Activated B cell treated with CpG ODN at 0.5 μM for 24 hours (primary cell): ENCODE measurements at regions of chr7 and their contacts with region 1.

Region 1: GRCh38 chr7:116236020-116236630 is 25.8 kb downstream of the TES start:
- DNase-seq: no peak
- ATAC-seq: peak; percentile 77
- H3K4me3 Mint-ChIP-seq: no peak overlapping the region
- H3K27ac Mint-ChIP-seq: no peak overlapping the region
- H3K4me1 Mint-ChIP-seq: peaks cover 27% of the 10 kb centered on the region
- H3K27me3 Mint-ChIP-seq: no peaks in the 10 kb centered on the region
- CTCF ChIP-seq: no peak

Region 2: GRCh38 chr7:116138202-116138801 is 97.8 kb before region 1 on chr7:
- CTCF ChIA-PET with region 1: interaction called, 56 read pairs
- POLR2A ChIA-PET with region 1: no interaction called
- intact Hi-C with region 1: loop called (anchors 1 kb)
- DNase-seq: no peak
- ATAC-seq: peak; percentile 91
- H3K4me3 Mint-ChIP-seq: no peak overlapping the region
- H3K27ac Mint-ChIP-seq: no peak overlapping the region
- H3K4me1 Mint-ChIP-seq: peaks cover 33% of the 10 kb centered on the region
- H3K27me3 Mint-ChIP-seq: no peaks in the 10 kb centered on the region
- CTCF ChIP-seq: peak; percentile 48

Region 3: GRCh38 chr7:116173051-116174028 is 62.8 kb before region 1 on chr7:
- CTCF ChIA-PET with region 1: interaction called, 318 read pairs
- POLR2A ChIA-PET with region 1: no interaction called
- intact Hi-C with region 1: loop called (anchors 1 kb)
- DNase-seq: no peak
- ATAC-seq: peak; percentile 49
- H3K4me3 Mint-ChIP-seq: no peak overlapping the region
- H3K27ac Mint-ChIP-seq: no peak overlapping the region
- H3K4me1 Mint-ChIP-seq: peaks cover 12% of the 10 kb centered on the region
- H3K27me3 Mint-ChIP-seq: no peaks in the 10 kb centered on the region
- CTCF ChIP-seq: no peak

Region 4: GRCh38 chr7:116180302-116180701 is 55.8 kb before region 1 on chr7:
- CTCF ChIA-PET with region 1: interaction called, 318 read pairs
- POLR2A ChIA-PET with region 1: no interaction called
- intact Hi-C with region 1: loop called (anchors 1 kb)
- DNase-seq: no peak
- ATAC-seq: peak; percentile 81
- H3K4me3 Mint-ChIP-seq: no peak overlapping the region
- H3K27ac Mint-ChIP-seq: no peak overlapping the region
- H3K4me1 Mint-ChIP-seq: no peaks in the 10 kb centered on the region
- H3K27me3 Mint-ChIP-seq: peaks cover 2% of the 10 kb centered on the region
- CTCF ChIP-seq: no peak

Region 5: GRCh38 chr7:116200963-116201362 is 35.2 kb before region 1 on chr7:
- CTCF ChIA-PET with region 1: interaction called, 21 read pairs
- POLR2A ChIA-PET with region 1: no interaction called
- intact Hi-C with region 1: no loop called
- DNase-seq: no peak
- ATAC-seq: no peak
- H3K4me3 Mint-ChIP-seq: no peak overlapping the region
- H3K27ac Mint-ChIP-seq: no peak overlapping the region
- H3K4me1 Mint-ChIP-seq: no peaks in the 10 kb centered on the region
- H3K27me3 Mint-ChIP-seq: no peaks in the 10 kb centered on the region
- CTCF ChIP-seq: no peak

Region 6: DNA sequence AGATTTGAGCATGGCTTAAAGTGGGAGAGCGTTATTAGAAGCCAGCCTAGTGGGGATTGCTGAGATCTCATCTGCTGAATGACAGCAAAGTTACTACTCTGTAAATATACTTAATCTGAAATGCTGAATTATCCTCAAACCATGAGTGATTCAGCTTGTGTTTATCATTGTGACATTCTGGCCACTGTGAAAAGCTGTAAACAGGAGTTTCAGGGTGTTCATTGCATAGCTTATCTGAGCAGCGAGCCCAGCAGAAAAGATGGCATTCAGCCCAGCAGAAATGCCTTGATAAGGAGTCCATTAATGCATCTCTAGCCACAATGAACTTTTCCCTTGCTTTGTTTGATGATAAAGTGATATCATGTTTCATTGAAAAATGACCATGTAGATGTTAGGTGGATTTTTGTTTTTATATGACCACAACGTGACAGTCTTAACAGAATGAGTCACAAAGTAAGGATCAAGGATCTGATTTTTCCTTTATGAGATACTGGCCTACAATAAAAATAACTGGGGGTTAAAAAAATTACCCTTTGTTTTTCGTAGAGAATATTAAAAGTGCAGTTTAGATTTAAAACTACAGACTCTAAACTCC is 18.0 kb before region 1 on chr7:
- CTCF ChIA-PET with region 1: interaction called, 20 read pairs
- POLR2A ChIA-PET with region 1: interaction called, 3 read pairs
- intact Hi-C with region 1: loop called (anchors 2 kb)
- DNase-seq: no peak
- ATAC-seq: no peak
- H3K4me3 Mint-ChIP-seq: peak overlapping the region; percentile 28
- H3K27ac Mint-ChIP-seq: no peak overlapping the region
- H3K4me1 Mint-ChIP-seq: peaks cover 83% of the 10 kb centered on the region
- H3K27me3 Mint-ChIP-seq: no peaks in the 10 kb centered on the region
- CTCF ChIP-seq: no peak

Region 7: GRCh38 chr7:116224492-116225098 is 11.5 kb before region 1 on chr7:
- CTCF ChIA-PET with region 1: interaction called, 20 read pairs
- POLR2A ChIA-PET with region 1: interaction called, 3 read pairs
- intact Hi-C with region 1: loop called (anchors 1 kb)
- DNase-seq: no peak
- ATAC-seq: peak; percentile 82
- H3K4me3 Mint-ChIP-seq: peak overlapping the region; percentile 62
- H3K27ac Mint-ChIP-seq: peak overlapping the region; percentile 72
- H3K4me1 Mint-ChIP-seq: peaks cover 84% of the 10 kb centered on the region
- H3K27me3 Mint-ChIP-seq: no peaks in the 10 kb centered on the region
- CTCF ChIP-seq: no peak

Region 8: GRCh38 chr7:116443101-116443523 is 207.0 kb after region 1 on chr7:
- CTCF ChIA-PET with region 1: no interaction called
- POLR2A ChIA-PET with region 1: no interaction called
- intact Hi-C with region 1: no loop called
- DNase-seq: no peak
- ATAC-seq: no peak
- H3K4me3 Mint-ChIP-seq: no peak overlapping the region
- H3K27ac Mint-ChIP-seq: no peak overlapping the region
- H3K4me1 Mint-ChIP-seq: no peaks in the 10 kb centered on the region
- H3K27me3 Mint-ChIP-seq: peaks cover 6% of the 10 kb centered on the region
- CTCF ChIP-seq: no peak

Region 9: DNA sequence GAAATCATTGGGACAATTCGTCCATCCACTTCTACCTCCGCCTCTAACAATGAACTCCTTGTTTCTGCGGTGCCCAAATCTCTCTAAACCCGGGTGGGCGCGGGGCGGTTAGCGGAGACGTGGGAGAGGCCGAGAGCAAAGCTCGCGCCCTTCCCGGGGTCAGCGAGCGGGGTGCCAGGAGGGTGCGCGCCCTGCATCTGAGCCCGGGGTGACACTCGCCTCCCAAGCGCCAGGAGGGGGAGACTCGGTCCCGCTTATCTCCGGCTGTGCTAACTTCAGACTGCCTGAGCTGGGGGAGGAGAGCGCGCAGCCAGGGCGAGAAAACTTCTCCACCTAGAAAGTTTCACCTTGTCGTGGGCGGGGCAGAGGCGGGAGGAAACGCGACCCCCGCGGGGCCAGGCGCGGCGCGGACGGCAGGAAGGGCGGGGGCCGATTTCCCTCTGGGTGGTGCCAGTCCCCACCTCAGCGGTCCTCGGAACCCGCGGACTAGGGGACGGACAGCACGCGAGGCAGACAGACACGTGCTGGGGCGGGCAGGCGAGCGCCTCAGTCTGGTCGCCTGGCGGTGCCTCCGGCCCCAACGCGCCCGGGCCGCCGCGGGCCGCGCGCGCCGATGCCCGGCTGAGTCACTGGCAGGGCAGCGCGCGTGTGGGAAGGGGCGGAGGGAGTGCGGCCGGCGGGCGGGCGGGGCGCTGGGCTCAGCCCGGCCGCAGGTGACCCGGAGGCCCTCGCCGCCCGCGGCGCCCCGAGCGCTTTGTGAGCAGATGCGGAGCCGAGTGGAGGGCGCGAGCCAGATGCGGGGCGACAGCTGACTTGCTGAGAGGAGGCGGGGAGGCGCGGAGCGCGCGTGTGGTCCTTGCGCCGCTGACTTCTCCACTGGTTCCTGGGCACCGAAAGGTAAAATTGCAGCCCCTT is 435.8 kb after region 1 on chr7 and contains the start of gene MET:
- CTCF ChIA-PET with region 1: no interaction called
- POLR2A ChIA-PET with region 1: no interaction called
- intact Hi-C with region 1: no loop called
- DNase-seq: peak; percentile 54
- ATAC-seq: peak; percentile 86
- H3K4me3 Mint-ChIP-seq: peak within 1 kb of the TSS; percentile 79
- H3K27ac Mint-ChIP-seq: no peak within 1 kb of the TSS
- H3K4me1 Mint-ChIP-seq: peaks cover 20% of the 10 kb centered on the region
- H3K27me3 Mint-ChIP-seq: peaks cover 64% of the 10 kb centered on the region
- CTCF ChIP-seq: no peak
- total RNA-seq, gene MET: 1.1 and 1.5 TPM in 2 replicates